Panc1 (cell line): ENCODE measurements at regions of chr5 and their contacts with region 1.

Region 1: DNA sequence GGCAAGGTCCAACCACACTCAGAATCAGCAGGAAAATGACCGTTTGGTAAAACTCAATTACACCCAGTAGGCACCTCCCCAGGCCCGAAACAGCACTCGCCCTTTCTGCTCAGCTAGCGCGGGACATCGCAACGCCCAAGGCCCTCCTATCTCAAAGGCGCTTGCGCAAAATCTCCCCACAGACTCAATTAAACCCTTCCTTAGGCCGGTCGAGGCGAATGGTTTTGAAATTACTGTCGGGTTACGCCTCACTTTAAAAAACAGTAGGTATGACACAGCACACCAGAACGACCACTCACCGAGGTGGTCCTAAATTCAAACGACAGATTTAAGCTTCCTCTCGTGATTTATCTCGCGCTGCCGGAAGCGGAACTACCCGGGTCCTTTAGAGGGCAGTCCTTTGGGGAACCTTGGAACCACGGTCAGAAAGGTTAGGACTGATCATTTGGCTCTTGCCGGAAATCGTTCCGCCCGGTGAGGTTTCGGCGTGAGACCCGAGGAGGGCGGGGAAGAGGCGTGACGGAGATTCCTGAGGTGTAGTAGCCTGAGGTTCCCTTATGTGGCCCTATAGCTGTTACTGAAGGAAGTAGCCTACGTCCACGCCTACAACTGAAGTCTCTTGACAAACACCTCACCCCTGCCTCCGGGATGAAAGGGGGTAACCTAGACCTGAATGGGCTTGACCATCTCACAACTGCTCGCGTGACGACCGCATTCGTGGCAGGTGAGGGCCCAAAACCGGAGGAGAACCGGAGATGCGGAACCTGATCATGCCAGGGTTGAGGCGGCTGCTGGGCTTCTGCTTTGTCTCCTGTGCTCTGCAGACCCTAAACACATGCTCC is at the starts of genes GIN1 and PPIP5K2:
- DNase-seq: peak; percentile 98
- ATAC-seq: peak; percentile 98
- H3K4me3 ChIP-seq: peak within 1 kb of the TSS; percentile 98 to 100
- H3K27ac ChIP-seq: peak within 1 kb of the TSS; percentile 100
- H3K4me1 ChIP-seq: peaks cover 16% of the 10 kb centered on the region; the same call in 1 of the 2 replicates
- H3K27me3 ChIP-seq: no peaks in the 10 kb centered on the region
- CTCF ChIP-seq: no peak
- total RNA-seq, gene GIN1: 4.5 TPM
- total RNA-seq, gene PPIP5K2: 56.8 TPM

Region 2: GRCh38 chr5:102782311-102782770 is 337.6 kb before region 1 on chr5:
- CTCF ChIA-PET with region 1: no interaction called
- POLR2A ChIA-PET with region 1: no interaction called
- in situ Hi-C with region 1: no loop called
- intact Hi-C with region 1: loop called (anchors 10 kb)
- DNase-seq: no peak
- ATAC-seq: no peak
- H3K4me3 ChIP-seq: no peak overlapping the region
- H3K27ac ChIP-seq: no peak overlapping the region
- H3K4me1 ChIP-seq: no peaks in the 10 kb centered on the region
- H3K27me3 ChIP-seq: no peaks in the 10 kb centered on the region
- CTCF ChIP-seq: no peak